ENCODE measurements at regions of chr20 and their contacts with region 1.

Region 1: DNA sequence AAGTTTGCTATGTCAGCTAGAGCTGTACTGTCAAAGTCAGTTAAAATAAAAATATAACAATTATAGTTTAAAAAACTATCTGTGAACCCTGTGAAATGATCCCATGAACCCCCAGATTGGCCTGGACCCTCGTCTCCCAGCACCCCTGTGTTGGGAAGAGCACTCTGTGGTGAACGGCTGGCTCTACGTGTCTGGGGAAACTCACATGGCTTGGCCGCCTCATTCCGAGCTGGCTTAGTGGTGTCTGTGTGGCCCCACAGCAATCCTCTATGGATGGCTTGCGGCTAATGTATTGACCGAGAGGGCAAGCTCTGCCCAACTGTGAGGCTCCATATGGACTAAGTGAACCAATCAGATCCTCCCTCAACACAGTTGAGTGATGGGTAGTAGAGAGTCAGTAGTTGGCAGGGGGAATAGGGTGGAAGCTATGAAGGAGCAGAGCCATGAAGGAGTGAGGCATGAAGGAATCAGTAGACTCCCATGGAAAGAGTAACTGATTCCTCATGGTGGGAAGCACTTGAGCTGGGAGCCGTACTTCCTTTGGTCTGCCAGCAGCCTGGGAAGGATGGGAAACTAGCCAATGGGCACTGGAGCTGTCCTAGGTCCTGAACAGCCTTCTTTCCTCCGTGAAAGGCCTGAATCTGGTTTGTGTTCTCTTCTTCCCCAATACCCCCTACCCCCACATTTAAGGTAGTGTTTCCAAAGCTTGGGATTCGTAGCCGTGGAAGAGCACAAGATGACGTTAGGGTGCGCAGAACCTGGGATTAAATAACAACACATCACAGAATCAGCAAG is 21.6 kb upstream of the ZNF831 start:
- DNase-seq: no peak
- ATAC-seq: no peak
- H3K4me3 Mint-ChIP-seq: no peak overlapping the region
- H3K27ac Mint-ChIP-seq: no peak overlapping the region
- H3K4me1 Mint-ChIP-seq: peaks cover 51% of the 10 kb centered on the region
- H3K27me3 Mint-ChIP-seq: no peaks in the 10 kb centered on the region
- CTCF ChIP-seq: no peak

Region 2: GRCh38 chr20:59120491-59120890 is 21.5 kb before region 1 on chr20:
- CTCF ChIA-PET with region 1: interaction called, 7 read pairs
- POLR2A ChIA-PET with region 1: interaction called, 44 read pairs
- intact Hi-C with region 1: loop called (anchors 2 kb)
- DNase-seq: peak; percentile 67
- ATAC-seq: peak; percentile 15
- H3K4me3 Mint-ChIP-seq: no peak overlapping the region
- H3K27ac Mint-ChIP-seq: peak overlapping the region; percentile 97
- H3K4me1 Mint-ChIP-seq: peaks cover 75% of the 10 kb centered on the region
- H3K27me3 Mint-ChIP-seq: no peaks in the 10 kb centered on the region
- CTCF ChIP-seq: no peak

Measured in activated CD8-positive, alpha-beta T cell treated with anti-CD3 and anti-CD28 coated beads for 36 hours (primary cell).